Psoas muscle (tissue), 8 donors: ENCODE measurements at regions of chr1 and their contacts with region 1.

Region 1: GRCh38 chr1:93437976-93438605 is 9.8 kb upstream of the FNBP1L start:
- DNase-seq: no peak
- ATAC-seq: peak in 3 of 4 donors; percentile 66 to 85 (median 79)
- H3K4me3 ChIP-seq: no peak overlapping the region
- H3K27ac ChIP-seq: no peak overlapping the region
- H3K4me1 ChIP-seq: no peaks in the 10 kb centered on the region
- H3K27me3 ChIP-seq: no peaks in the 10 kb centered on the region
- CTCF ChIP-seq: peak; percentile 80

Region 2: DNA sequence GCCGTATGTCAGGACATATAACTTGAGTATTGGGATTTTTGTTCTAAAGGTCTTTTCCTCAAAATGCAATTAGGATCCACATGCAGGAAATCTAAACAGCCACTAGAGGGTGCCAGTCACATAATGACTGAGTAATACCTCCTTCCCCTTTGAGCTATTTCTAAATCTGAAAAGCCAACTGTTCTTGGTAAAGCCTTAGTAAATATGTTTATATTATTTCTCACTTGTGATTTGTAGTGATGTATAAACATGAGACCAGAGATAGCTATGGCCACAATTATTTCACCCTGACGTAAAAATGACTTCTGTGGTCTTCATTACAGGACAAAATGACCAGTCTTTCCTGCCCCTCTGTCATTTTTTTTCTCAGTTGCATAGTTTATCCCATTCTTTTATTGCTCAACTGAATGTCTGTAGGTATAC is 133.4 kb before region 1 on chr1:
- intact Hi-C with region 1: loop called (anchors 10 kb)
- DNase-seq: no peak
- ATAC-seq: peak; percentile 51 to 89 (median 70)
- H3K4me3 ChIP-seq: no peak overlapping the region
- H3K27ac ChIP-seq: no peak overlapping the region
- H3K4me1 ChIP-seq: no peaks in the 10 kb centered on the region
- H3K27me3 ChIP-seq: no peaks in the 10 kb centered on the region
- CTCF ChIP-seq: peak; percentile 87

Region 3: GRCh38 chr1:93614986-93615581 is 177.0 kb after region 1 on chr1:
- intact Hi-C with region 1: loop called (anchors 5 kb)
- DNase-seq: no peak
- ATAC-seq: peak in 1 of 4 donors; percentile 34
- H3K4me3 ChIP-seq: no peak overlapping the region
- H3K27ac ChIP-seq: peak overlapping the region; percentile 86
- H3K4me1 ChIP-seq: peaks cover 52% of the 10 kb centered on the region
- H3K27me3 ChIP-seq: no peaks in the 10 kb centered on the region
- CTCF ChIP-seq: no peak

Region 4: DNA sequence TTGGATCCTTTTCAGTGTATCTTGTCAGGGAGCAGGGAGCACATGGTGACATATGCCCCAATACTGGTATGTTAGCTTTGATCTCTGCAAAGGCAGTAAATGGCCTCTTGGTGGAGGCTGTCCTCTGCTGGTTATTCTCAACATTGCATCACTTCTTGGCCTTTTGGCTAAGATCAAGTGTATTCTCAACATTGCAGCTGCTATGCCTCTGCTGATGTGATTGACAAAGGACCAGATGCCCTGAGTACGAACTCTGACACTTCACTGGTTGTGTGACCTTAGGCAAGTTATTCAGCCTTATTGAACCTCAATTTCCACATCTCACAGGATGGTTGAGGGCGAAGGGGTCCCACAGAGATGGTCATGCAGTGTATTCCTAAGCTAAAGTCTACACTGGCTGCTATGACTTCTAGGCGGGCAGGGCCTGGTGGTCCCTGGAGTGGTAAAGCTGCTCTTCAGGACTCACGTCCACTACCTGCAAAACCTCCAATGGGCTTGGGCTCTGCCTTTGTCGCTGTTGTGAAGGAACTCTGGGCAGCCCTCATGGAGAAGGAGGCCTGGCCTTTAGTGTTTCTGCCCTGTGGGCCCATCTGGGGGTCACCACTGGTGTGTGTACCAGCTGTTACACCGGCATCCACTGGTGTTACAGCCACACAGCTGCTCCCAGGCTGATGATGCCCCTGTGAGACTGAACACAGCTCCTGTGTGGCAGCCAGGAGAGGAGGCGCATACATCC is 376.1 kb after region 1 on chr1:
- intact Hi-C with region 1: loop called (anchors 10 kb)
- DNase-seq: no peak
- ATAC-seq: peak; percentile 84 to 97 (median 90)
- H3K4me3 ChIP-seq: no peak overlapping the region
- H3K27ac ChIP-seq: no peak overlapping the region
- H3K4me1 ChIP-seq: no peaks in the 10 kb centered on the region
- H3K27me3 ChIP-seq: no peaks in the 10 kb centered on the region
- CTCF ChIP-seq: peak; percentile 98

Region 5: GRCh38 chr1:93846211-93846991 is 408.3 kb after region 1 on chr1:
- intact Hi-C with region 1: loop called in 1 of 2 experiments (anchors 10 kb)
- DNase-seq: peak; percentile 89 to 92
- ATAC-seq: peak; percentile 61 to 75 (median 68)
- H3K4me3 ChIP-seq: peak overlapping the region; percentile 76
- H3K27ac ChIP-seq: peak overlapping the region; percentile 92
- H3K4me1 ChIP-seq: peaks cover 27% of the 10 kb centered on the region
- H3K27me3 ChIP-seq: no peaks in the 10 kb centered on the region
- CTCF ChIP-seq: peak; percentile 40